RWPE1 (cell line): ENCODE measurements at regions of chr12 and their contacts with region 1.

Region 1: DNA sequence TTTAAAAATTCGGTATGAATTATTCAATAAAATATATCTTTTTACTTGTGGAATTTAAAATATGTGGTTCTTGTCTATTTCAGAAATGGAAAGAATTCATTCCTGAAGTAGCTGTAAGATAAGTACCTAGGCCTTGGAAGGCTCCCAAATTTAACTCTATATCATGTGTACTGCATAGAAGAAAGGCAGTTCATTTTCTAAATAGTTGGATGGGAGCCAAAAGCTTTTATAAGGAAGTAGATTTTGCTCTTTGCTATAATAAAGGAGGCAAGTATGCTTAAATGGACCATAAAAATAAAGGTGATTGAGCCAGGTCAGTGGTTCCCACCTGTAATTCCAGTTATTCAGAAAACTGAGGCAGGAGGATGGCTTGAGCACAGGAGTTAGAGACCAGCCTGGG is 187.5 kb downstream of the ATXN7L3B start:
- DNase-seq: no peak
- H3K27ac ChIP-seq: no peak overlapping the region
- CTCF ChIP-seq: no peak

Region 2: DNA sequence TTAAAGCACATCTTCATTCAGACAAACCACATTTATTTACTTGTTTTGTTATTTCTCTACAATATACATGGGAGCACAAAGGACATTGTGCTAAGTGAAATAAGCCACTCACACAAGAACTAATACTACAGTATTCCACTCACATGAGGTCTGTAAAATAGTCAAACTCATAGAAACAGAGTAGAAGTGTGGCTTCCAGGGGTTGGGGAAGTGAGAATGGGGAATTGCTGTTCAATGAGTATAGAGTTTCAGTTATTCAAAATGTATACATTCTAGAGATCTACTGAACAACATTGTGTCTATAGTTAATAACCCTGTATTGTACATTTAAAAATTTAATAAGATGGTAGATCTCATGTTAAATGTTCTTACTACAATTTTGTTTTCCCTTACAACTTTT is 98.8 kb before region 1 on chr12:
- CTCF ChIA-PET with region 1: no interaction called
- POLR2A ChIA-PET with region 1: no interaction called
- DNase-seq: no peak
- H3K27ac ChIP-seq: no peak overlapping the region
- CTCF ChIP-seq: no peak

Region 3: GRCh38 chr12:74663958-74664357 is 61.2 kb before region 1 on chr12:
- CTCF ChIA-PET with region 1: interaction called, 13 read pairs
- POLR2A ChIA-PET with region 1: no interaction called
- DNase-seq: no peak
- H3K27ac ChIP-seq: no peak overlapping the region
- CTCF ChIP-seq: no peak